Heart left ventricle (tissue), 16 donors: ENCODE measurements at regions of chr15 and their contacts with region 1.

Region 1: DNA sequence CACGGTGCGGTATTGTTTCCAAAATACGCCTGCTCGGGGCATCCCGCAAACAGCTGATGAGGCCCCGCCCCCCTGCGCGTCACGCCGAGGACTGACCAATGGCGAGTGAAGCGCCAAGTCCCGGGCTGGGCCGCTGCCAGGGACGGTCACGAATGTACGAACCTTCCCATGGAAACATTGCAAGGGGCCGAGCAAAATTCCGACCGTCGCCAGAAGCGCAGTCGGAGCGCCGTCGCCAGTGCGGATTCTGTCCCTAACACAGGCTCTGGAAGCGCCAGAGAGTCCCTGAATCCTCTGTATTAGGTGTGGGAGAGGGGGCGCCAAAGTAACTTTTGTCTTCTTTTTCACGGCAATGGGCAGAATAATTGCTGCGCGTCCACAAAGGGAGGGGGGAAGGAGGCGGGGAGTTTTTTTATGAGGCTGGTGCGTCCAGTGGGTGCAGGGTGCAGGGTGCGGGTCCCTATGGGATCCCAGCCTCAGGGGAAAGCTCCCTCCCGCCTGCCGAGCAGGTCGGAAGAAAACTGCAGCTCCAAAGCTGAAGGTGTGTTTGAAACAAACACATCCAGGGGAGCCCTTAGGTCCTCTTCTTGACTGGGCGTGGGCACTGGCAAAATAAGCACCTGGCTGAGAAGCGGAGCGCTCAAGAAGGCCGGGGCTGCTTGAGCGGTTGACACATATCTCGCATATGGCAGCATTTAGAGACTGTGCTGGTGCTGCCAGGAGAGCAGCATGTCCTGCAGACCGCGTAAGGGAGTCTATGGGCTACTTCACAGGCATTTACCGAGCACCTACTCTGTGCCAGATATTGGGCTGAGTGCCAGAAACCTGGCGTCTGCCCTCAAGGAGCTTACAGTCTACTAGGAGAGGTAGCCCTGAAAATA is at the start of gene BMF:
- DNase-seq: peak; percentile 100
- ATAC-seq: peak; percentile 87 to 93 (median 90)
- H3K4me3 ChIP-seq: peak within 1 kb of the TSS; percentile 60 to 98 (median 80)
- H3K27ac ChIP-seq: peak within 1 kb of the TSS; percentile 26 to 90 (median 77)
- H3K4me1 ChIP-seq: peaks cover 0 to 43% (median 32%) of the 10 kb centered on the region in 12 donors
- H3K27me3 ChIP-seq: peaks cover 0 to 4% (median 0%) of the 10 kb centered on the region in 9 donors
- CTCF ChIP-seq: peak in 7 of 12 donors; percentile 11 to 54 (median 32)
- POLR2A ChIP-seq: peak in 1 of 2 donors; percentile 20
- total RNA-seq, gene BMF: 1.2 to 12.9 (median 3.5) TPM

Region 2: GRCh38 chr15:40028853-40029252 is 80.2 kb before region 1 on chr15:
- intact Hi-C with region 1: no loop called
- DNase-seq: no peak
- ATAC-seq: peak in 3 of 4 donors; percentile 26 to 71 (median 32)
- H3K4me3 ChIP-seq: peak overlapping the region in 7 of 12 donors; percentile 1 to 32 (median 22)
- H3K27ac ChIP-seq: peak overlapping the region; percentile 56 to 86 (median 74)
- H3K4me1 ChIP-seq: peaks cover 0 to 53% (median 29%) of the 10 kb centered on the region in 12 donors
- H3K27me3 ChIP-seq: no peaks in the 10 kb centered on the region
- CTCF ChIP-seq: no peak
- POLR2A ChIP-seq: no peak

Region 3: DNA sequence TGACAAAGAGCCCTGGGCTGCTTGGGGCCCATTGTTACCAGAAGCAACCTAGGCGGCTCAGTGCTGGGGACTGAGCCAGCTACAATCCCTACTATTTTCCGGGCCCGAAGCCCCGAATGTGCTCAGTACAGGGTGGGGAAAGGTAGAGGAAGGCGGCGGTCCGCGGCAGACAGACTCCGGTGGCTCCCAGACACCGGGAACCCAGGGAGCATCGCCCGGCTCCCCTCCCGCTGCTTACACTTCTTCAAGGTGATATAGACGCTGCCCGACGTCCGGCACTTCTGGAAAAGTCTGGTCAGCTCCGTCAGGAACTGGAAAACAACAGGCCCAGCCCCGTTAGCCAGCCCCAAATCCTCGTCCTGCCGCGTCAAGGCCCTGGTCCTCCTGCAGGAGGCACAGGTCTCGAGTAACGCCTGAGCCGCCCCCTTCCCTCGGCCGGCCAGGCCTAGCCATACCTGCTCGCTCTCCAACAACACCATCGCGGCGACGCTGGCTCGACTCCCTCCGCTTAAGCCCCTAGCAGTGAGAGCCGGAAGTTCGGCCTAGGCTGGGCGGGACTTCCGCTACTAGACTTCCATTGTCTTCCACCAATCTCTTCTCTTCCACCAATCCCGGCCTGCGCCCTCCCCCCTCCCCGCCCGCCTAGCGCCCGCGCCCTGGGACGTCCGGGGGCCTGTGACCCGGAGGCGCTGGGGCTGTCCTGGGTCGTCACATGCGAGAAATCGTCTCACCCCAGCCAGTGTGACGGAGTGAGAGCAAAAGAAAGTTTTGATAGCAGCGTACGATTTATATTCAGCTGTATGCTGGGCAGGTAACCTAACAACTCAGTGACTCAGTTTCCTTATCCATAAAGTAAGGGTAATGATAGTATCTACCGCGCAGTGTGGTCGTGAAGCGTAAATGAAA is 70.2 kb before region 1 on chr15 and contains the start of gene SRP14:
- intact Hi-C with region 1: loop called in 3 of 10 experiments (anchors 2 to 10 kb)
- DNase-seq: peak; percentile 95 to 97 (median 97)
- ATAC-seq: peak; percentile 97 to 99 (median 98)
- H3K4me3 ChIP-seq: peak within 1 kb of the TSS; percentile 72 to 98 (median 84)
- H3K27ac ChIP-seq: peak within 1 kb of the TSS; percentile 88 to 98 (median 94)
- H3K4me1 ChIP-seq: peaks cover 4 to 43% (median 26%) of the 10 kb centered on the region in 12 donors
- H3K27me3 ChIP-seq: no peaks in the 10 kb centered on the region
- CTCF ChIP-seq: peak in 4 of 12 donors; percentile 13 to 27 (median 16)
- POLR2A ChIP-seq: peak in 1 of 2 donors; percentile 80
- total RNA-seq, gene SRP14: 189 to 446 (median 218) TPM

Region 4: DNA sequence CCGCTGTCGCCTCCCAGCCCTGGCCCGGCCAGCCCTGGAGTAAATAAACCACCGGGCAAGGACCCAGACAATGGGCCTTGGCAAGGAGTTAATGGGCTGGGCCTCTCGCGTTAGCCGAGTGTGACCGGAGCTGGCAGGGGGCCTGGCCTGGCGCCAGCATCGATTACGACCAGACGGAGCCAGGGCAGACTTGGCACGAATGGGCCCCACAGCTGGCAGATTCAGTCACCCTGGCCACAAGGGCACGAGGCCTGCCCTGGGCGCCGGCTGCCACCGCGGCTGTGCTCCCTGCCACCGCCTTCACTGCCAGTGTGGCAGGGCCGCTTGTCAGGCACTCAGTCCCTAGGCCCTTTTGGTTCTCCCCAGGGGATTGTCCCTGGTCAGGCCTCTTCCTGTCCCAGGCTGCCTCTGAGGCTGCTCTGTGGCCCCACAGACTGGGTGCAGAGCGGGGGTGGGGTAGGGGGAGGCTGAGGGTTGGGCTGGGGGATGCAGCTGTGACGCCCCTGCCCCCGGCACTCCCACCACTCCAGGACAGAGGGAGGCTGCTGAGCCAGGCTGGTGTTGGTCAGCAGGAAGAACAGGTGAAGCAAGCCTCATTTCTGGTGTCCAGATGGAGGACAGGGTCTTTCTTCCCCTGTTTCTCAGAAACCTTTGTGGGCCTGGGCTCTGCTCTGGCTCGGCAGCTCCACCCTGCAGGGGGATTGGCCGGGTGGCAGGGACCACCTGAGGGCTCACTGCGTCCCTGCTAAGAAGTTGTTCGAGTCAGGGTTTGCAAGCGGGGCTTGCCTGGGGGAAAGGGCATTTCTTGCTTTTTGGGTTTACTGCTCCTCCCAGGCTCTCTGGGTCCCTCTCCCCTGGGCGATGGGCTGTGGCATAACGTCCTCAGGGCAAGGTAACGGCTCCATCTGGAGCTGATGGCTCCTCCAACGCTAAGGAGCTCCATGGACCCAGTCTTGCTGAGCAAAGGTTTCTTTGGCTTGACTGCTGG is 39.6 kb before region 1 on chr15:
- intact Hi-C with region 1: loop called in 6 of 10 experiments (anchors 5 kb)
- DNase-seq: peak; percentile 92 to 97 (median 93)
- ATAC-seq: peak; percentile 93 to 97 (median 95)
- H3K4me3 ChIP-seq: no peak overlapping the region
- H3K27ac ChIP-seq: peak overlapping the region in 11 of 12 donors; percentile 37 to 87 (median 69)
- H3K4me1 ChIP-seq: peaks cover 0 to 36% (median 22%) of the 10 kb centered on the region in 12 donors
- H3K27me3 ChIP-seq: no peaks in the 10 kb centered on the region
- CTCF ChIP-seq: no peak
- POLR2A ChIP-seq: no peak

Region 5: DNA sequence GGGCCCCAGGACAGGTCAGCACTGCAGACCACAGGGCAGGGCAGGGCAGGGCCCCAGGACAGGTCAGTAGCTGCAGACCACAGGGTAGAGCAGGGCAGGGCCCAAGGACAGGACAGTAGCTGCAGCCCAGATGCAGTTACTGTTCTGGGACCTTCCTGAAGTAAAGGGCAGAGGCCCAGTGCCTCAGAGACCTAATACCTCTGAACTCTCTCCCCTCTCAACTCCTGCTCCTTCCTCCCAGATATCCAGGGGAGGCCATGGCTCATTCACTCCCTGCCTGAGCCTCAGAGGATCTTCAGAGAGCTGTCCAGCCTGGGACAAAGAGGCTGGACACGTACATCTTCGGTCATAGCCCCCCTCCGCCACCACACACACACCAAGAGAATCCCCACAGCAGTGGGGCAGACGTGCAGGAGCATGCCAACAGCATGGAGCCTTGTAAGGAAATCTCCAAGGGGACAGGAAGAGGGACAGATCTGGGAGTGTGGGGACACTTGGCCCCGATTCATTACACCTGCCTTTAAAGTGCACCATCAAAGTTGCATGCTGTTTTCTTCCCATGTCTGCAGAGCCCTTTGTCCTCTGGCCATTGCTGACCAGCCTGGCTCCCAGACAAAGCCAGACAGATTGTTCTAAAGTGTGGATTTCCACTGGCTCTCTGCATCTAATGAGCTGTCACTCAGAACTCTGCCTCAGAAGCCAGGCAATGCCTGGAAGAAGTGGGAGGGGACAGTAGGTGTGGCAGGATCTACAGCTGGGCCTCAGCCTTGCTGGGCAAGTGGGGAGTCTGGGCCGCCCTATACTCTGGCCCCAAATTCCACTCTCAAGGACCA is 27.6 kb after region 1 on chr15:
- intact Hi-C with region 1: no loop called
- DNase-seq: no peak
- ATAC-seq: peak in 1 of 4 donors; percentile 22
- H3K4me3 ChIP-seq: no peak overlapping the region
- H3K27ac ChIP-seq: no peak overlapping the region
- H3K4me1 ChIP-seq: no peaks in the 10 kb centered on the region
- H3K27me3 ChIP-seq: no peaks in the 10 kb centered on the region
- CTCF ChIP-seq: no peak
- POLR2A ChIP-seq: no peak

Region 6: DNA sequence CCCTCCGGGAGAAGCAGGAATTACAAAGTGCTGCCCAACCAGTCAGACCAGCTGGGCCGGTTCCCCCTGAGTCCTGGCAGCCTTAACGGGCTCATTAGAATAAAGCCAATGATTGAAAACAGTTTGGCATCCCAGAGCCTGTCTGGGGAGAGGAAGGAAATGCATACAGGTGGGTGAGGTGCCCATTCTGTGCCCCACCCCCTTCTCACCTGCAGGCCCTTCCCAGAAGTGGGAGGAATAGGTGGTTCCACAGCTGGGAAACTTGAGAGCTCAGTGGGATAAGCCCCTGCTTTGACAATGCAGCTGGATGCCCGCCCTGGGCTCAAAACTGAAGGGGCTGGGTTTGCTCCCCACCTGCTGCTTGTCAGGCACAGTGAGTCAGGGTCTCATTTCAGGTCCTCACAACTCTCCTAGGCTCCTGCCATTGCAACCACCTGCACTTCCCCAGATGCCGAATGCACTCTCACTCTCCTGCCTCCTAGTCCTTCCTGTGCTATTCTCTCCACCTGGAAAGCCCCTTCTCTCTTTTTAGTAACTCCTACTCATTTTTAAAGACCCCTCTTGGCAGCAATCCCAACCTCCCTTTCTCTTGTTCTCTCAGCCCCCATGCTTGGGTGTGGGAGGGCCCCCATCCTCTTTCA is 46.3 kb after region 1 on chr15:
- intact Hi-C with region 1: loop called in 7 of 10 experiments (anchors 2 to 5 kb)
- DNase-seq: no peak
- ATAC-seq: peak in 1 of 4 donors; percentile 25
- H3K4me3 ChIP-seq: no peak overlapping the region
- H3K27ac ChIP-seq: no peak overlapping the region
- H3K4me1 ChIP-seq: peaks cover 0 to 2% (median under 1%) of the 10 kb centered on the region in 12 donors
- H3K27me3 ChIP-seq: no peaks in the 10 kb centered on the region
- CTCF ChIP-seq: no peak
- POLR2A ChIP-seq: no peak

Region 7: DNA sequence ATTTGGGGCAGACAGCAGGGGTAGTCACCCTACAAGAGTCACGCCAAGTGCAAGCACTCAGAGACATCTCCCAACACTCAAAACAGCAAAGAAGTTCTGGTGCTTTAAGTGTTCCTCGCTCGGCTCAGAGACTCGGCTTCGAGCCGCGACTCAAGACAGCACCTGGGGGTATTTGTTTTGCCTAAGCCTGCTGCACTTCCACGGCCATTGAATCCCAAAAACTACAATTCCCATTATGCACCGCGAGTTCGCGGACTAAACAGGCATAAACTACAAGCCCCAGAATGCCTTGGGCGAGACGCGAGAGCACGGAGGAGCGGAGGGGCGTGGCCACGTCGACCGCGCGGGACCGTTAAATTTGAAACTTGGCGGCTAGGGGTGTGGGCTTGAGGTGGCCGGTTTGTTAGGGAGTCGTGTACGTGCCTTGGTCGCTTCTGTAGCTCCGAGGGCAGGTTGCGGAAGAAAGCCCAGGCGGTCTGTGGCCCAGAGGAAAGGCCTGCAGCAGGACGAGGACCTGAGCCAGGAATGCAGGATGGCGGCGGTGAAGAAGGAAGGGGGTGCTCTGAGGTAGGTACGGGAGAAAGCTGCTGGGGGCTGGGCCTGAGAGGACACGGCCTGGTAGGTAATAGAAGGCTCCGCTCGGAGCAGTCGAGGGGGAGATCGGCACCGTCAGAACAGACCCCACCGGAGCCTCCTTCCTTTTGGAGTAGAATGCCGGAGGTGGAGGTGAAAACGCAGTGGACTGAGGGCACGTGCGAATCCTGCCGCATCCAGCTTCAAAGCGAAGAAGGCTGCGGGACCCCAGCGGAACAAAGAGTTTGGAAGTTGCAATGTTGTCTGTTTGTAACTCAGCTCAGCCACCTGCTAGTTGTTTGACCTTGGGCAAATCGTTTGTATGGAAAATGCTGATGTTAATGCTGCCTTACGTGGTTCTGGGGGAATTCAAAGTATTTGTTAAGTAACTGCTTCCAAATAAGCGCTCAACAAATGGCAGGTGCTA is 51.9 kb after region 1 on chr15 and contains the start of gene BUB1B:
- intact Hi-C with region 1: loop called in 6 of 10 experiments (anchors 2 to 5 kb)
- DNase-seq: peak; percentile 90 to 94 (median 92)
- ATAC-seq: peak; percentile 98 to 99 (median 99)
- H3K4me3 ChIP-seq: peak within 1 kb of the TSS; percentile 24 to 70 (median 62)
- H3K27ac ChIP-seq: no peak within 1 kb of the TSS
- H3K4me1 ChIP-seq: peaks cover 0 to 12% (median 6%) of the 10 kb centered on the region in 12 donors
- H3K27me3 ChIP-seq: no peaks in the 10 kb centered on the region
- CTCF ChIP-seq: no peak
- POLR2A ChIP-seq: no peak
- total RNA-seq, gene BUB1B: 0.46 to 6.4 (median 1.2) TPM in 8 of 9 donors, not detected in the other

Region 8: DNA sequence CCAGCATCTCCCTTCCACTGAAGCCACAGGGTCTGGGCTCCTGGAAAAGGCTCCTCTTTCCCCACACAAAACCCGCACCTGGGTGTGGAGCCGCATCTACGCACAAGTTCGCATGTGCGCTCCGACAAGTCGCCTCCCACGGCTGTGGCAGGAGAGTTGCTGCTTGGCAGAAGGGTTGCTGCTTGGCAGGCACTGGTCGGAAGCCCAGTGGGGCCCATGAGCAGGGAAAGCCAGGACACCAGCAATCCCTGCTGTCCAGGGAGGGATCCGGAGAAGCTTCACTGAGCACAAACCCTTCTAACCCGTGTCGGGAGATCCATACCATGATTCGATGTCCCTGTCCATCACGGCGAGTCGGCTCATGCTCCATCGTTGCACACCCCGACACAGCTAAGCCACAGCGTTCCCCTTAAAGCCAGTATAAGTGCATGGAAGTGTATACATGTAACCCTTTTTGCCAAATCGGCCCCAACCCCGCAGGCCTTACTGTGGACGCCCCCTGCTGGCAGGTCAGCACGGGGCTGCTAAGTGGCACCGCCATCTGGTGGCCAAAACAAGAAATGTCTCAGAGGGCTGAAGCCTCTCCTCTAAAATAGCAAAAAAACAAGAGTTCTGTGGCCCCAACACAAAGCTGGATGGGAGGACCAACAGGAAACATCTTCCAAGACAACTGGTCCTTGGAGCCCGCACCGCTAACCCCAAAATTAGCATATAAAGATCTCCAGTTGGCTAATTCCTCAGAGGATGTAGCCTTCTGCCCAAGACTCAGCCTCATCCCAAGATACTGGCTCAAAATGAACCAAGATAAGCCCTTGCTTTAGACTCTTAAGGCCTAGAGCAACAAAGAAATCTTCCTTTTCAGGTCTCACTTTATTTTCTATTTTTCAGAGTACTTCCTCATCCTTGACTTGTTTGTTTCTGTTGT is 165.5 kb after region 1 on chr15:
- intact Hi-C with region 1: loop called in 2 of 10 experiments (anchors 5 to 10 kb)
- DNase-seq: peak; percentile 79 to 90 (median 82)
- ATAC-seq: peak; percentile 43 to 69 (median 55)
- H3K4me3 ChIP-seq: no peak overlapping the region
- H3K27ac ChIP-seq: no peak overlapping the region
- H3K4me1 ChIP-seq: peaks cover 0 to 31% (median 2%) of the 10 kb centered on the region in 12 donors
- H3K27me3 ChIP-seq: peaks cover 2 to 20% (median 8%) of the 10 kb centered on the region in 9 donors
- CTCF ChIP-seq: peak; percentile 99 to 100 (median 100)
- POLR2A ChIP-seq: no peak